ENCODE measurements at regions of chr4 and their contacts with region 1.

Region 1: DNA sequence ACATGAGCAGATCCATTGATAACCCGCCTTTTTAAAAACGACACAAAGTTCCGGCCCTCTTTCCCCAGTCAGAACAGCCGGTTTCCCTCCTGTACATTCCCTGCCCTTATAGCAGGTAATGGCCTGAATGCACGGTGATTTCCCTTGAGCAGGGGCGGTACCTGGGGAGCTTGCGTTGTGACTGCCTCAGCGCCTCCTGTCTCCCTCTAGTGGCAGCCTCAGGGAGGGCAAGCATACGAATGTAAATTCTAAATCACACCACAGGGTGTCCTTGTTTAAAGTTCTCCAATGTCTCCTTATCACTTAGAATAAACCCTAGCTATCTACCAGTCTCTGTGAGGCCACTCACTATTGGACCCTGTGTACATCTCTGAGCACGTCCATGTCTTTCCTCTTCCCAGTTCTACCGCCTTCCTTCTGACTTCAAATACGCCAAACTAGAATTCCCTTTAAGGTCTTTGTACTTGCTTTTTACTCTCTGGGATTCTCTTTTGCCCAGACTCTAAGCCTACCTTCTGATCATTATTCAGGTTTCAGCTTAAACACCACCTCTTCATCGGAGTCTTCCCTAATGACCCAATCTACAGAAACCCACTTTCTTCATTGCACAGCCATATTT is 18.4 kb upstream of the LDB2 start:
- DNase-seq: peak; percentile 74
- H3K4me3 Mint-ChIP-seq: no peak overlapping the region
- H3K27ac Mint-ChIP-seq: no peak overlapping the region
- H3K4me1 Mint-ChIP-seq: no peaks in the 10 kb centered on the region
- H3K27me3 Mint-ChIP-seq: no peaks in the 10 kb centered on the region
- CTCF ChIP-seq: peak; percentile 63

Region 2: DNA sequence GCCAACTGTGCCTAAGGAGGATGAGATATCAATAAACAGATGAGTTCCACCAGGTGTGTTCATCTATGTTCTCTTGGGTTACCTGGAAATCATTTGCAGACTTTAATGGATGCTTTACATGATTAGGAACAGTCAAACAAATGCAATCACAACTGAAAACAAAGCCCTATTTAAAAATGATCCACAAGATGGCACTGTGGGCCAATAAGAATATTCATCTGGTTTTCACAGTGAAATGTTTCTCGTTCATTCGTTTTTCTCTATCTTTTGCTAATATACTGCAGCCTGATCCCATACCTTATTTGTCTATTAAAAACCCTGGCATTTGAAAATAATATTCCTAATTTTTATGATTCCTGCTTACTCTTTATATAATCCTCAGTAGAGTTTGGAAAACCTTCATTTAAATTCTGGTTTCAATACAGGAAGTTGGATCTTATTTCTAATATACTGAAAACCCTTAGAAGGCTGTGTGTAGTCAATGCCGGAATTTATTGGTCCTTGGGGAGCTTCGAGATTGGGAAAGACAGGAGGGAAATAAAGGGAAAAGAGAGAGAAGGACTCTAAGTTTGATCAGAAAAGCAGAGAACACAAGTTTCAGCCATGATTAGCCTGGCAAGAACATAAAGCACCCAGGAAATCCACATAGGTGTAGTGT is 626.8 kb before region 1 on chr4:
- CTCF ChIA-PET with region 1: no interaction called
- intact Hi-C with region 1: loop called (anchors 10 kb)
- DNase-seq: no peak
- H3K4me3 Mint-ChIP-seq: no peak overlapping the region
- H3K27ac Mint-ChIP-seq: no peak overlapping the region
- H3K4me1 Mint-ChIP-seq: no peaks in the 10 kb centered on the region
- H3K27me3 Mint-ChIP-seq: no peaks in the 10 kb centered on the region
- CTCF ChIP-seq: peak; percentile 31

Region 3: DNA sequence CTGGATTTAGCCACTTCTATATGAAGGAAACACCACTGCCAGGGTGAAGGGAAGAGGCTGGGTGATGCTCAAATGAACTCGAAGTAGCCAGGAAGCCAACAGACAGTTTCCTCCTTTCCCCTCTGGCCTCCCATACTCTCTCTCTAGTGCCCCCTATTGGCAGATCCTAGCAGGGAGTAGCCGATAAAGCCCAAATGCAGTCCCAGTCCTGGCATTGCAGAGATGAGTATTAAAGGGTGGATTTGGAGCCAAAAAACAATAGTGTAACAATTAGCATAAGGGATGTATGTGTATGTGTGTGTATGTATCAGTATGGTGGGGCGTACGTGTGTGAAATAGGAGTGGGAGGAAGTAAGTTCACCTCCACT is 195.4 kb after region 1 on chr4:
- CTCF ChIA-PET with region 1: no interaction called
- intact Hi-C with region 1: loop called (anchors 5 kb)
- DNase-seq: peak; percentile 12
- H3K4me3 Mint-ChIP-seq: no peak overlapping the region
- H3K27ac Mint-ChIP-seq: no peak overlapping the region
- H3K4me1 Mint-ChIP-seq: no peaks in the 10 kb centered on the region
- H3K27me3 Mint-ChIP-seq: no peaks in the 10 kb centered on the region
- CTCF ChIP-seq: no peak

Region 4: DNA sequence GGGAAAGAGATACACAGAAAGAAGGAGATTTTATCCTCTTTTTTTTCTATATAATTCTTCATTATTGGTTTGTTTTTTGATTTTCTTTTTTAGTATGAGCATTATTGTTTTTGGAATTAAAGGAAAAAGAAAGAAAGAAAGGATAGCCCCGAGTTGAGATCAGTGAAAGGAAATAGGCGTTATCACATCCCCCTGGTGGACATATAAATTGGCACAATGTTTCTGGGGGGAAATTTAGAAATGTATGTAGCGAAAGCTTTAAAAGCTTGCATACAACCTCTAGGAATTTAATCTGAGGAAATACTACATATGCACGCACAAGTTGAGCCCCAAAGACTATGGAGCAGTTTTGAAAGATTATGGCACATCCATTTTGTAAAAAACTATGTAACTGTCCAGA is 207.9 kb after region 1 on chr4:
- CTCF ChIA-PET with region 1: no interaction called
- intact Hi-C with region 1: loop called (anchors 5 kb)
- DNase-seq: no peak
- H3K4me3 Mint-ChIP-seq: no peak overlapping the region
- H3K27ac Mint-ChIP-seq: no peak overlapping the region
- H3K4me1 Mint-ChIP-seq: no peaks in the 10 kb centered on the region
- H3K27me3 Mint-ChIP-seq: no peaks in the 10 kb centered on the region
- CTCF ChIP-seq: no peak

Region 5: DNA sequence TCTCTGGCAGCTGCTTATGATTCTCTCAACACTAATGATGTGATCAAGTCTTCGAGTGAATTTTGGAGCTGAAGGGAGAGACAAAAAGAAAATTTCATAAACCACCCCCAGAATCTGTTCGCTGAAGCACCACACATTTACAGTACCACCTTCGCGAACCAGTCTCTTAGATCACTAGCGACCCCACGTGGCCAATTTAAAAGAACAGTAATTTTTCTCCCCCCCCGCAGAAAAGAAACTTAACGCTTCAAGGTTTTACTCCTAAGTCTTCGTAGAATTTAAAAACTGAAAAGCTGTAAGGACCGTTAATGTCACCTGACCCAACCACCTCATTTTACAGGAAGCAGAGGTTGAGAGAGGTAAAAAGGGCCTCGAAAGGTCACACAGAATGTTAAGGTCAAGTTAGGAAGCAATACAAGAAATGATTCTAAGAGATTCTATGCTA is 407.6 kb after region 1 on chr4:
- CTCF ChIA-PET with region 1: no interaction called
- intact Hi-C with region 1: loop called (anchors 1 kb)
- DNase-seq: peak; percentile 32
- H3K4me3 Mint-ChIP-seq: no peak overlapping the region
- H3K27ac Mint-ChIP-seq: no peak overlapping the region
- H3K4me1 Mint-ChIP-seq: no peaks in the 10 kb centered on the region
- H3K27me3 Mint-ChIP-seq: peaks cover 10% of the 10 kb centered on the region
- CTCF ChIP-seq: peak; percentile 58